Posterior vena cava (tissue), 2 donors: ENCODE measurements at regions of chr1 and their contacts with region 1.

Region 1: GRCh38 chr1:221192055-221192454 is 312.8 kb downstream of the HLX start:
- DNase-seq: no peak

Region 2: DNA sequence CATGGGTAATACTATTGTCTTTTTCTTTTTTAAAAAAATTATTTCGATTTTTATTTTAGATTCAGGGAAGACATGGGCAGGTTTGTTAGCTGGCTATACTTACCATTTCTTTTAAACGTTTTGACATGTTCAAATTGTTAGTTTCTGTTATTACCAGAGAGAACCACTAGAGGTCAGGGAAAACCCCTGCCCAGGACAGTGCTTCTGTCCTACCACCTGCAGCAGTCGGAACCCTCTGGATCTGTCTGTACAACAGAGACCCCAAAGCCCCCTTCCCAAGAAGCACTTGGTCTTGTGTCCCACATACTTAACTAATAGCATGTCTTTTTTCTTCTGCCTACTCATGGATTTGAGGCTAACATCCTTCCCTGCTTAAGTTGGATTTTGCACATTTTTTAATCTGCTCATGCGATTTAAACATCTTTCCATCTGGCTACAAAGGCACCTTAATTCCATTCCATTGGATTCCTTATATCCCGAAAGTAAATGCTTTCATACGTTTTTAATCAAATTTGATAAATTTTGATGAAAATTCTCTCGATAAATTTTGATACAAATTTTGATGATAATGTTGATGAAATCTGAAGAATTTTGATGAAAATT is 511.9 kb before region 1 on chr1:
- intact Hi-C with region 1: no loop called
- DNase-seq: no peak

Region 3: DNA sequence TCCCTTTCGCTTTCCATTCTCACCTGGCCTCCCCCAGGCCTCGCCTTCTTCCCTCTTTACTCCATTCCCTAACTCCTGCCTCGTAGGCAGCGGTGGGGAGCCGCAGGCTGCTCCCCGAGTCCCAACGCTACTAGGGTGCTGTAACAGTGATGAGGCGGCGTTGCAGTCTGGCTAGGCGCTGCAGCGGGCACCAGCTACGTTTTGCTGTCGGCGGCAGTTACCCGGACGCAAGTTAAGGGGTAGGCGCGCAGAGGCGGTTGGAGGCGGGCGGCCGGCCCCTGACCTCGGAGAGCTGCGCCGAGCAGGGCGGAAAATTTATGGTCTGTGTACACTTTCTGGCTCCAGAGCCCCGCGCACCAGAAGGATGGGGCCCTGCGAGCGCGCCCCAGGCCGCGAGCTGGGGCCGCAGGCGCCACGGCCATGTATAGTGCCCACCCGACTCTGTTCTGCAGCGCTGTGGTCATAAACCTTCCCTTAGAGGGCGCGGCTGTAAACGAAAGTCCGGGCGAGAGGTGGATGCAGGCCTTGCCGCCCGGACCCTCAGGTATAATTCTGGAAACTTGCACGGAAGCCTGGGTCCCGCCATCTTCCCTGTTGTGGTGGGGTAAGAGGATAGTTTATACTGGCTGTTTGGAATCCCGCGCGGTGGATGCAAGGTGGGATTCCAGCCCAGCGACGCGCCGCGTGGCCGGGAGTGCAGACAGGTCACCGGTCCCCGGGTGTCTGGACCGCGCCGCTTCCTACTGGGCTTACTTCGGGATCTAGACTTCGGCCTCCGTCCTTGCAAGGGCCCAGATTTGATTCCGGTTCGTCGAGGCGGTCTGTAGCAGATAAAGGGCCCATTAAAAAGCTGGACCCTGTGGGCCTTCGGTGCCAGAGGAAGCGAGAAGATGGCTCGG is 297.8 kb before region 1 on chr1:
- intact Hi-C with region 1: no loop called
- DNase-seq: no peak

Region 4: GRCh38 chr1:221174330-221174999 is 17.6 kb before region 1 on chr1:
- intact Hi-C with region 1: loop called in 1 of 2 experiments (anchors 1 kb)
- DNase-seq: peak; percentile 81